ENCODE measurements at regions of chr12 and their contacts with region 1.

Region 1: DNA sequence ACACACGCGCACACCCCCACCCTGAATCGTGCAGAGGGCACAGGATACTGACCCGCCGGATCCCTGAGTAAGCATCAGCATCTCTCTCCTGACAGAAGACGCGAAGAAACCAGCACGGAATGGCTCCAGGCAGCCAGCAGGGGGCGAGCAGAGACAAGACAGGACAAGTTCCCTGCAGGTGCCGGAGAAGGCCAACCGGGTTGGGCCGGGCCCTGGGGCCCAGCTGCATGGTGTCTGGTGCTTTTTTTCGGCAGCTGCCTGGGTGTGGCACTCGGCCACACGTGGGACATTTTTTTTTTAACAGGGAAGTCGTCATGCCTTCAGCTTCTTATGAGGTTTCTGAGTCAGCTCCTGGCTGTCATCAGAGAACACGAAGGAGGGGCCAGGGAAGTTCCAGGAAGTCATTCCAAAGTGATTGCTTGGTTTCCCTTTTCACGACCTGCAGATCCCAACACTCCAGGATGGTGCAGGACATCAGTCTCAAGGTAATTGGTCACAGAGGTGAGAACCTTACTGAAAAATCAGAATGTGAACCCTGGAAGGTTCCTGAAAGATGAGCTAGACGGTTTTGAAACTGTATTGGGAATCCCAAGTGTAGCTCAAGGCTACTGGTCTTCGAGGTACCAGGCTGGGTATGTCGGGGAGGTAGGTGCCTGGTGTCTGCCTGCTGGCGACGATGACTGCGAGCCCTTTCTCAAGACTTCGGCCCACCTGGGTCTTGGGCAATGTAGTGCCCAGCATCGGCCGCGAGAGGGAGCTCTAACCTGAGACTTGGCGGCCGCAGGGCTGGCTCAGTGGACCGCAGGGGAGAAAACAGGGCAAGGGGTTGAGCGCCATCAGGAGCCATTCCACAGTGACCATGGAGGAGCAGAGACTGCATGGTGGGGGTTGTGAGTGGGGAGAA is 190.8 kb upstream of the PRMT8 start:
- DNase-seq: peak; percentile 79
- H3K4me3 ChIP-seq: no peak overlapping the region
- H3K27ac ChIP-seq: peak overlapping the region; percentile 48
- H3K4me1 ChIP-seq: peaks cover 22% of the 10 kb centered on the region
- H3K27me3 ChIP-seq: no peaks in the 10 kb centered on the region
- CTCF ChIP-seq: peak; percentile 96
- POLR2A ChIP-seq: no peak

Region 2: DNA sequence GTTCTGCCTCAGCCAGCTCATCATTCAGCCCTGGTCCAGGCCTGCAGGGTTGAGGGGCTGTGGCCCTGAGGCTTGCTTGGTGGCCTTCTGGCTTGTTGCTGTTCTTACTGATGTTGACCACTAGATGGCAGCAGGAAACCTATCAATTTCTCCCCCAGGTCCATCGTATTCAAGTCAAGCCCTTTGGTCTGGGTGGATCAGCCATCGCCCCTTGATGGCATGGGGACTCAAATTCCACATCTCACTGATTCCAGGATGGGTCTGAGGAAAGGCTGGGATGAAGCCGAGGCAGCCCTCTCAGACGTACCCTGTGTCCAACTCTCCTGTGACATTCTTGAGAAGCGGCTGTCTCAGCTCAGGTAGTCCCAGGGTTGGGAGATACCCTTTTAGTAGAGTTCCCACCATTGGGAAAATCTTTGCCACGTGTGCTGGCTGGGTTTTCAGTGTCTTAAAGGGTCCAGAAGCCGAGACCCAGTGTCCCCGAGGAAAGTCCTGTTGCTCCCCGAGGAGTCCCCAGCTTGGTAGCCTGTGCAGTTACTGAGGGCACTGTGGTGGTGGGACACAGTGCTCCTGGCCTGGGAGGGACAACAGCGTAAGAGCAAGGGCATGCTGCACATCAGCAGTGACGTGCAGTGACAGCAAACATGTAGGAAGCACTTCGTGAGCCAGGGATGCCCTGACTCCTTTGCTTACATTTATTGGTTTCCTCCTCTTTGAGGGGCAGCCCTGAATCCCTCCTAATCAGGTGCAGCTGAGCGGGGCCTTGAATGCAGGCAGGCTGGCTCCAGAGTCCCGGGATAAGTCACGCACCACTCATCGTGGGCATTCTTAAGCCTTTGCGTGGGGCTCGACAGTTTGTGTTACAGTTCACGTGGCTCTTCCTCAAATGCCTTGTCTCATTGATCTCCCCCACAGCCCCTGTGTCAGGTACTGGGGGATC is 164.4 kb before region 1 on chr12:
- CTCF ChIA-PET with region 1: interaction called, 24 read pairs
- POLR2A ChIA-PET with region 1: no interaction called
- dilution Hi-C with region 1: no loop called
- intact Hi-C with region 1: no loop called
- DNase-seq: peak; percentile 69
- H3K4me3 ChIP-seq: no peak overlapping the region
- H3K27ac ChIP-seq: no peak overlapping the region
- H3K4me1 ChIP-seq: peaks cover 11% of the 10 kb centered on the region
- H3K27me3 ChIP-seq: no peaks in the 10 kb centered on the region
- CTCF ChIP-seq: peak; percentile 75 to 79
- POLR2A ChIP-seq: no peak

Region 3: DNA sequence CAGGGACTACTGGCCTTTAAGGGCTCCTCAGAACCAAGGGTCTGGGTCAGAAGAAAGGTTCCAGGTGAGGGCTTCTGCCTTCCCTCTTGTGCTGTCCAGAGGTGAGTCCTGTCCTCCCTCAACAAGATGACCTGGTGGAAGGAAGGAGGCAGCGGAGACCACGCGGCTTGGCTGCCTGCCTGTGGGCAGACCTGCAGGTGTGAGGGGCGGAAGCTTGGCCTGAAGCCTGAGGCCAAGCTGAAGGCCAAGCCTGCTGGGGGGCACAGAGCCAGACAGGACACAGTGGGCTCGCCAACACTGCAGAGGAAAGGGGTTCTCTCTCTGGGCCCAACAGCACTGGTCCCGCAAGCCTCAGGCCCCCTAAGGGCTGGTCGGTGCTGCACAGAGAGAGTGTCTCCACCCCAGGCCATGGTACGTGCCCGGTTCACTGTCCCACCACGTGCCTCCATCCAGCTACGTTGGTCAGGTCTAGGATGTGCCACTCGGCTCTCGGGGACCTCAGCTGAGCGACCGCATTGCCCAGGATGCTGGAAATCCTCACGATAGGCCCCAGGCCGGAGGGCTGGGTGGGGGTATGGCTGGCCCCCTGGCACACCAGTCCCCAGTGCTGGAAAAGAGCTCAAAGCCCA is 20.8 kb after region 1 on chr12:
- CTCF ChIA-PET with region 1: interaction called, 149 read pairs
- POLR2A ChIA-PET with region 1: no interaction called
- dilution Hi-C with region 1: no loop called
- intact Hi-C with region 1: no loop called
- DNase-seq: no peak
- H3K4me3 ChIP-seq: no peak overlapping the region
- H3K27ac ChIP-seq: no peak overlapping the region
- H3K4me1 ChIP-seq: no peaks in the 10 kb centered on the region
- H3K27me3 ChIP-seq: peaks cover 1 to 2% of the 10 kb centered on the region in 2 experiments
- CTCF ChIP-seq: no peak
- POLR2A ChIP-seq: no peak

Region 4: GRCh38 chr12:3680896-3681594 is 380.9 kb after region 1 on chr12:
- CTCF ChIA-PET with region 1: interaction called, 55 read pairs
- POLR2A ChIA-PET with region 1: no interaction called
- dilution Hi-C with region 1: no loop called
- intact Hi-C with region 1: no loop called
- DNase-seq: peak; percentile 61
- H3K4me3 ChIP-seq: no peak overlapping the region
- H3K27ac ChIP-seq: no peak overlapping the region
- H3K4me1 ChIP-seq: no peaks in the 10 kb centered on the region
- H3K27me3 ChIP-seq: no peaks in the 10 kb centered on the region
- CTCF ChIP-seq: peak in 1 of 2 donors; percentile 66
- POLR2A ChIP-seq: no peak

Region 5: DNA sequence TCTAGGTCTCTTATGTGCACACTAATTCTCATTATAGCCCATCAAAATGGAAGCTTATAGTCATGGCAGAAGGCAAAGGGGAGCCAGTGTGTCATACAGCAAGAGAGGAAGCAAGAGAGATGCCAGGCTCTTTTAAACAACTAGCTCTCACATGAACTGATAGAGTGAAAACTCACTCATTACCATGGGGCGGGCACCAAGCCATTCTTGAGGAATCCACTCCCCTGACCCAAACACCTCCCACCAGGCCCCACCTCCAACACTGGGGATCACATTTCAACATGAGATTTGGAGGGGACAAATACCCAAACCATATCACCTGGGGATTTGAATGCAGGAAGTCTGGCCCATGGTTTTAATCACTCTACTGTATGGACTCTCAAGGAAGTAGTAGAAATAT is 489.7 kb after region 1 on chr12:
- CTCF ChIA-PET with region 1: interaction called, 19 read pairs
- POLR2A ChIA-PET with region 1: no interaction called
- dilution Hi-C with region 1: no loop called
- intact Hi-C with region 1: no loop called
- DNase-seq: no peak
- H3K4me3 ChIP-seq: no peak overlapping the region
- H3K27ac ChIP-seq: no peak overlapping the region
- H3K4me1 ChIP-seq: no peaks in the 10 kb centered on the region
- H3K27me3 ChIP-seq: peaks cover 0 to 4% of the 10 kb centered on the region in 2 experiments
- CTCF ChIP-seq: no peak
- POLR2A ChIP-seq: no peak

Region 6: GRCh38 chr12:4037747-4038312 is 737.6 kb after region 1 on chr12:
- CTCF ChIA-PET with region 1: interaction called, 13 read pairs
- POLR2A ChIA-PET with region 1: no interaction called
- dilution Hi-C with region 1: no loop called
- intact Hi-C with region 1: no loop called
- DNase-seq: peak; percentile 39
- H3K4me3 ChIP-seq: no peak overlapping the region
- H3K27ac ChIP-seq: no peak overlapping the region
- H3K4me1 ChIP-seq: no peaks in the 10 kb centered on the region
- H3K27me3 ChIP-seq: peaks cover 0 to 5% of the 10 kb centered on the region in 2 experiments
- CTCF ChIP-seq: peak; percentile 39 to 61
- POLR2A ChIP-seq: no peak